ENCODE measurements at regions of chr21 and their contacts with region 1.

Region 1: GRCh38 chr21:39137248-39138178 is 45.7 kb downstream of the PSMG1 start:
- DNase-seq: no peak
- ATAC-seq: no peak
- H3K4me3 ChIP-seq: no peak overlapping the region
- H3K27ac ChIP-seq: no peak overlapping the region
- H3K4me1 ChIP-seq: peaks cover 0 to 5% of the 10 kb centered on the region in 2 donors
- H3K27me3 ChIP-seq: no peaks in the 10 kb centered on the region
- CTCF ChIP-seq: no peak

Region 2: DNA sequence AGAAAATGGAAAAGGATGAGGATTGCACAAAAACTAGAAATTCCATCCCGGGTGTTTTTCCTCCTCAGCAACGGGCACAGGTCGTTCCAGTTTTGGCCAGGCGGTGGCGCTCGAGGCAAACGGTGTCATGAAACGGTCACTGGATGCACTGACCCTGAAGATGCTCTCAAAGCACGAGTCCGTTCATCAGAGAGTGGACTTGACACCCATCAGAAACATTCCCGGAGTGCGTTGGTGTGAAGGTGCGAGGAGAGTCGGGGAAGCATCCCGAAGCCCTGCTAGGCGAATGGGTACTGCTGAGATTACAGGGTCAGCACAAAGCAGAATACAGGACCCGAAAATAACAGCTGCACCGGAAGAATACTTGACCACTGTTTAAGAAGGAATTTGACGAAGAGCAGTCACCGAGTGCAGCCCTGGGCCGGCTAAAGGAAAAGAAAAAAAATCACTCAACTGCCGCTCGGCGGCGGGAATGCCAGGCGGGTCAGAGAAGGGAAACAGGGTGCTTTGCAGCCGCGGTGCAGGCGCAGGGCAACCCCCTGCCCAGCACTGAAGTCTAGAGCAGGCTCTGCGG is 403.5 kb before region 1 on chr21:
- intact Hi-C with region 1: loop called (anchors 5 to 10 kb)
- DNase-seq: peak; percentile 86 to 97 (median 88)
- ATAC-seq: peak; percentile 99
- H3K4me3 ChIP-seq: peak overlapping the region; percentile 9 to 26
- H3K27ac ChIP-seq: peak overlapping the region; percentile 72 to 75
- H3K4me1 ChIP-seq: peaks cover 0 to 8% of the 10 kb centered on the region in 2 donors
- H3K27me3 ChIP-seq: no peaks in the 10 kb centered on the region
- CTCF ChIP-seq: peak; percentile 94 to 95